HCT116 (cell line): ENCODE measurements at regions of chr17 and their contacts with region 1.

Region 1: GRCh38 chr17:67200720-67201301 is 44.2 kb downstream of the HELZ start:
- DNase-seq: peak; percentile 18
- ATAC-seq: peak; percentile 99
- H3K4me3 ChIP-seq: no peak overlapping the region
- H3K27ac ChIP-seq: no peak overlapping the region
- H3K4me1 ChIP-seq: no peaks in the 10 kb centered on the region
- H3K27me3 ChIP-seq: no peaks in the 10 kb centered on the region
- CTCF ChIP-seq: peak in 2 of 3 experiments; percentile 78 to 79; a peak in 4 of 6 replicates
- POLR2A ChIP-seq: no peak
- RAD21 ChIP-seq: peak; percentile 8; the same call in 1 of the 2 replicates

Region 2: GRCh38 chr17:67212689-67213417 is 12.0 kb after region 1 on chr17:
- CTCF ChIA-PET with region 1: interaction called, 10 read pairs
- POLR2A ChIA-PET with region 1: interaction called, 5 read pairs
- RAD21 ChIA-PET with region 1: no interaction called
- intact Hi-C with region 1: no loop called
- DNase-seq: no peak
- ATAC-seq: no peak
- H3K4me3 ChIP-seq: no peak overlapping the region
- H3K27ac ChIP-seq: no peak overlapping the region
- H3K4me1 ChIP-seq: no peaks in the 10 kb centered on the region
- H3K27me3 ChIP-seq: no peaks in the 10 kb centered on the region
- CTCF ChIP-seq: no peak
- POLR2A ChIP-seq: no peak
- RAD21 ChIP-seq: no peak